ENCODE measurements at regions of chr19 and their contacts with region 1.

Region 1: DNA sequence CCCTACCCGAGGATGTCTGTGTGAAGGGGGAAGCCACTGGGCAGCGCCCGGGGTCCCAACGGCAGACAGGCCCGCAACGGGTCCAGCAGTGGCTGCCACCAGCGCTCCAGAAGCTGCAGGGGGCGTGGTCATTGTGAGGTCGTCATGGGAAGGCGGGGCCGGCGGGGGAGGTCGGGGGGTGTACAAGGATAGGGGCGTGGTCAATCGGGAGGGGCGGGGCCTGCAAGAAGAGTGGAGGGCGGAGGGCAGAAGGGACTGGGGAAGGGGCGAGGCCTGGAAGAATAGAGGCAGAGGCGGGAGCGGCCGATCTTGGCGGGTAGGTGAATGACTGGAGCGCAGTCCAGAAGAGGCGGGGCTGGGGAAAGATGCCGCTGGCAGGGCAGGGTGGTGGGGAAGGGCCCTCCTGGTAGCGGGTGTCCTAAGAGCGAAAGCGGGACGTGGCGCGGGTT is 4.4 kb downstream of the FUZ start:
- DNase-seq: peak; percentile 69 to 92 (median 83)
- ATAC-seq: peak; percentile 76
- H3K4me3 ChIP-seq: peak overlapping the region; percentile 71
- H3K4me3 Mint-ChIP-seq: peak overlapping the region; percentile 85 to 96 (median 90)
- H3K27ac ChIP-seq: peak overlapping the region; percentile 73
- H3K27ac Mint-ChIP-seq: peak overlapping the region; percentile 66 to 94 (median 84)
- H3K4me1 ChIP-seq: peaks cover 11 to 16% of the 10 kb centered on the region in 2 donors
- H3K4me1 Mint-ChIP-seq: peaks cover 20 to 39% (median 28%) of the 10 kb centered on the region in 7 donors
- H3K27me3 ChIP-seq: no peaks in the 10 kb centered on the region
- H3K27me3 Mint-ChIP-seq: no peaks in the 10 kb centered on the region

Region 2: GRCh38 chr19:49712397-49712859 is 96.3 kb before region 1 on chr19:
- CTCF ChIA-PET with region 1: no interaction called
- POLR2A ChIA-PET with region 1: interaction called, 11 read pairs
- intact Hi-C with region 1: loop called in 1 of 2 experiments (anchors 1 kb)
- DNase-seq: no peak
- ATAC-seq: no peak
- H3K4me3 ChIP-seq: no peak overlapping the region
- H3K4me3 Mint-ChIP-seq: no peak overlapping the region
- H3K27ac ChIP-seq: no peak overlapping the region
- H3K27ac Mint-ChIP-seq: peak overlapping the region in 1 of 9 donors; percentile 83
- H3K4me1 ChIP-seq: peaks cover 0 to 2% of the 10 kb centered on the region in 2 donors
- H3K4me1 Mint-ChIP-seq: peaks cover 3 to 12% (median 4%) of the 10 kb centered on the region in 7 donors
- H3K27me3 ChIP-seq: no peaks in the 10 kb centered on the region
- H3K27me3 Mint-ChIP-seq: peaks cover 0 to 4% (median 0%) of the 10 kb centered on the region in 5 donors

Region 3: DNA sequence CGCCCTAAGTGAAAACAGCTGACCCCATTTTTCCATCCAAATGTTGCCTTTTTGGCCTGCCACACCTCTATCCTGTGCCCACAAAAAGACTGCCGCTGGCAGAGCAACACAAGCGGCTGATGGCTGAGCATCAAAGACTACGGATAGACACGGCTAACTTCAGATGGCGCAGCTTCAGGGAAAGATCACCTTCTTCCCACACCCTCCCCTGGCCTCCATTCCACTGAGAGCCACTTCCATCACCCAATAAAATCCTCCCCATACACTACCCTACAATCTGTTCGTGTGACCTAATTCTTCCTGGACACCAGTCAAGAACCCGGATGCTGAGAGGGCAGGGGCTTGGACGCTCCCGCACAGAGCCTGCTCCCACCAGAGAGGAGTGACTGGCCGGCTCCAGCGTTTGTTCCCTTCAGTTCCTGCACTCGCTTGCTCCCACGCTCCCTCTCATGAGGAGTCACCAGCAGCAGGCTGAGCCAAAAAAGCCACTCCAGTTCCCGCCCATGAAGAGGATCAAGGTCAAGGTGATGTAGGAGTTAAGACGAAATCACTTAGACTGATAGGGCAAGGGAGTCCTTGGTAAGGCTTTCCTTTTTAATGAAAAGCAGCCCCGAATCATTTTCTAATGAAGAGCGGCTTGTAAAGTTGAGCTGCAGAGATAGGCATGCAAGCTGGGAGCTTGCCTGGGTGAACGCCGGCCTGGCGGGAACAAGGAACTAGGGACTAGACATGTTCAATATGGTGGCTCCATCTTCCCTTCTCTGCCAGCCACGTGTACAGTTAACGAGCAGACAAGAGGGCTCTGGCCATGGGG is 81.3 kb before region 1 on chr19:
- CTCF ChIA-PET with region 1: no interaction called
- POLR2A ChIA-PET with region 1: no interaction called
- intact Hi-C with region 1: no loop called
- DNase-seq: no peak
- ATAC-seq: no peak
- H3K4me3 ChIP-seq: no peak overlapping the region
- H3K4me3 Mint-ChIP-seq: no peak overlapping the region
- H3K27ac ChIP-seq: no peak overlapping the region
- H3K27ac Mint-ChIP-seq: no peak overlapping the region
- H3K4me1 ChIP-seq: no peaks in the 10 kb centered on the region
- H3K4me1 Mint-ChIP-seq: peaks cover 0 to 4% (median 0%) of the 10 kb centered on the region in 7 donors
- H3K27me3 ChIP-seq: no peaks in the 10 kb centered on the region
- H3K27me3 Mint-ChIP-seq: no peaks in the 10 kb centered on the region

Measured in naive thymus-derived CD4-positive, alpha-beta T cell (primary cell).